PC-9 (cell line): ENCODE measurements at regions of chr20 and their contacts with region 1.

Region 1: GRCh38 chr20:24917797-24918578 is 31.1 kb upstream of the CST7 start:
- DNase-seq: peak; percentile 49 to 62
- H3K4me3 ChIP-seq: no peak overlapping the region
- H3K27ac ChIP-seq: no peak overlapping the region
- H3K4me1 ChIP-seq: 0 out of 2 replicates have a peak, but pooled peaks cover 5% of the 10 kb centered on the region
- H3K27me3 ChIP-seq: no peaks in the 10 kb centered on the region
- CTCF ChIP-seq: peak; percentile 93

Region 2: DNA sequence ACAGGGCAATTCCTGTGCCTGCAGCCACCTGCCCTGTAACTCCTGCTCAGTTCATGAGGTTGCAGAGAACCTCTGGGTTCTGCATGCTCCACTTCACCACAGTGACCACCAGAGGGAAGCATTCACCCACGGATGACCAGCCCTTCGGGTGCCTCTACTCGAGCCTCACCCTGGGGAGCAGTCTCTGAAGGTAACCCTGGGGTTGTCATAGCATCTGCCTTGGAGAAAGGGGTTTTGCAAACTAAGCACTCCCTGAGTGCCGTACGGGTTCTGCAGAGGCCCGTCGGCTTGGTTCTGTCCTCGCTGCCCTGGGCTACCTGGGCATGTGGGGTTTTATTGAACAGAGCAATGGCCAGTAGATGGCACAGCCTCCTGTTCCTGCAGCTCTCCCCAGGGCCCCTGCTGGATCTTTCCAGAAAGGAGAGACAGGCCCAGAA is 1028.2 kb before region 1 on chr20:
- CTCF ChIA-PET with region 1: no interaction called
- POLR2A ChIA-PET with region 1: no interaction called
- intact Hi-C with region 1: loop called (anchors 2 kb)
- DNase-seq: peak; percentile 63 to 83
- H3K4me3 ChIP-seq: no peak overlapping the region; the same call in 1 of the 2 replicates
- H3K27ac ChIP-seq: no peak overlapping the region
- H3K4me1 ChIP-seq: peaks cover 14% of the 10 kb centered on the region
- H3K27me3 ChIP-seq: no peaks in the 10 kb centered on the region
- CTCF ChIP-seq: peak; percentile 96

Region 3: DNA sequence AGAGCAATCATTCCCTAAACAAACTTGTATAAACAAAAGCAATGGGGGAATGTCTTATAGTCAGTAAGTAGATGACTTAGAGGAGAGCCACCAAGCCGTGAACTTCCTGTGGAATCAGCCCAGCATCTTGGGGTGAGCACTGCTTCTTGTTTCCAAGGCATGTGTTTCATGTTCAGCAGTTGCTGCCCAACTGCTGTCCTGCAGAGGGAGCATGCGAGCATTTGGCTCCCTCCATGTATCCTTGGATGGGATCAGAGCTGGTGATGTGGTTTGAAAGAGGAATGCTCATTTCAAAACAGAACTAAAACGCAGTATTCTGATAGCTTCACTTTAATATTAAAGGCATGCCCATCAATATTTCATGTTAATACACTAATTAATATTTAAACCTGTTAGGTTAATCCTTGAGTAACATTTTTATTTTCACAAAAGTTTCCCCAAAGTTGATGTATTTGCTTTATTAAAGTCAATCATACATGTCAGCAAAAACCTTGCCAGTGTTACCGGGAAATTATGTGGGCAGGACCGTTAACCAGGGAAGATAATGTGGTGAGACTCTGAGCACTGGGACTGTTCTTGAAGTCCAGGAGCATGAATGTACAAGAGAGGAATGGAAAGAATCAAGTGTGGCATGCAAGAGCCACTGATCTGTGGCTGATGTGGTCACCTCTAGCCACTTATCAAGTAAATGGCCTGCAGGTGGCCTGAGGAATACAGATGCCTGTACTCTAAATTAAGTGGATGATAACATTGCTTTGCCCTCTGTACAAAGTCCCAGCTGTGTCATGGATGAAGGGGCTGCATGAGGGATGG is 757.2 kb before region 1 on chr20:
- CTCF ChIA-PET with region 1: no interaction called
- POLR2A ChIA-PET with region 1: no interaction called
- intact Hi-C with region 1: loop called (anchors 5 kb)
- DNase-seq: peak in 1 of 2 experiments; percentile 36
- H3K4me3 ChIP-seq: no peak overlapping the region
- H3K27ac ChIP-seq: no peak overlapping the region
- H3K4me1 ChIP-seq: peaks cover 15% of the 10 kb centered on the region
- H3K27me3 ChIP-seq: no peaks in the 10 kb centered on the region
- CTCF ChIP-seq: peak; percentile 74

Region 4: DNA sequence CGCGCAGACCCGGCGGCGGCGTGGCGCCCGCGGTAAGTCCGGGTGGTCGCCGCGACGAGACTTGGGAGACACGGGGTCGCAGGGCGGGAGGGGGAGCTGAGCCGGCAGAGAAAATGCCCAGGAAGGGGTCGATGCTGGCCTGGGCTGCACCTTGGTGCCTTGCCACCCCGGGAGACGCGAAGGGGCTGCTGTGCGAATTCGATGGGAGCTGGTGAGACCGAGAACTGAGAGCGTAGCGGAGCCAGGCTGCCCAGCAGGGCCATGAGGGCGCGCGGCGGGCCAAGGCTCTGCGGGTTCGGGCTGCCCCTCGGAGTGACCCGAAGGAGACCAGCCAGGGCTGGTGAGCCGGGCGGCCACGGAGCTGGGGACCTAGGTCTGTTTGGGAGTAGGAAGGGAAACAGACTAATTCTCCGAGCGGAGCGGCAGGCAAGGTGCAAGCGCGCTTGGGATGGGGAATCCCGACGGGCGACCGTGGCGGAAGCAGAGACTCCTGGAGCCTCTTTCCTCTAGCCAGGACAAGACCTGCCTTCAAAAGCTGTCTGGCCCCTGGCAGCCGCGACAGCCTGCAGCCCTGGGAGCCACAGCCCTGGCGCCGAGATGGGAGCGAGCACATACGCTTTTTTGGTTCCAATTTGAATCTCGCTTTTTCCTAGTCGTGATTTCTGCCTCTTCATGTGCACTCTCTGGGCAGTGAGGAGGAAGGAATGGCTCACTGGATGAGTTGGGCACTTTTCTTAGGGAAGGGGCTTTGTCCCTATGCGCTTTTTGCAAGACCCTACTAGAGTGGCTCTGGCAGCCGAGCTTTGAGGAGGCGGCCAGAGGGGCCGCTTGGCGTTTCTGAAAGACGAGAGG is 447.9 kb before region 1 on chr20:
- CTCF ChIA-PET with region 1: no interaction called
- POLR2A ChIA-PET with region 1: no interaction called
- intact Hi-C with region 1: loop called (anchors 10 kb)
- DNase-seq: no peak
- H3K4me3 ChIP-seq: no peak overlapping the region
- H3K27ac ChIP-seq: no peak overlapping the region
- H3K4me1 ChIP-seq: no peaks in the 10 kb centered on the region
- H3K27me3 ChIP-seq: no peaks in the 10 kb centered on the region
- CTCF ChIP-seq: no peak

Region 5: DNA sequence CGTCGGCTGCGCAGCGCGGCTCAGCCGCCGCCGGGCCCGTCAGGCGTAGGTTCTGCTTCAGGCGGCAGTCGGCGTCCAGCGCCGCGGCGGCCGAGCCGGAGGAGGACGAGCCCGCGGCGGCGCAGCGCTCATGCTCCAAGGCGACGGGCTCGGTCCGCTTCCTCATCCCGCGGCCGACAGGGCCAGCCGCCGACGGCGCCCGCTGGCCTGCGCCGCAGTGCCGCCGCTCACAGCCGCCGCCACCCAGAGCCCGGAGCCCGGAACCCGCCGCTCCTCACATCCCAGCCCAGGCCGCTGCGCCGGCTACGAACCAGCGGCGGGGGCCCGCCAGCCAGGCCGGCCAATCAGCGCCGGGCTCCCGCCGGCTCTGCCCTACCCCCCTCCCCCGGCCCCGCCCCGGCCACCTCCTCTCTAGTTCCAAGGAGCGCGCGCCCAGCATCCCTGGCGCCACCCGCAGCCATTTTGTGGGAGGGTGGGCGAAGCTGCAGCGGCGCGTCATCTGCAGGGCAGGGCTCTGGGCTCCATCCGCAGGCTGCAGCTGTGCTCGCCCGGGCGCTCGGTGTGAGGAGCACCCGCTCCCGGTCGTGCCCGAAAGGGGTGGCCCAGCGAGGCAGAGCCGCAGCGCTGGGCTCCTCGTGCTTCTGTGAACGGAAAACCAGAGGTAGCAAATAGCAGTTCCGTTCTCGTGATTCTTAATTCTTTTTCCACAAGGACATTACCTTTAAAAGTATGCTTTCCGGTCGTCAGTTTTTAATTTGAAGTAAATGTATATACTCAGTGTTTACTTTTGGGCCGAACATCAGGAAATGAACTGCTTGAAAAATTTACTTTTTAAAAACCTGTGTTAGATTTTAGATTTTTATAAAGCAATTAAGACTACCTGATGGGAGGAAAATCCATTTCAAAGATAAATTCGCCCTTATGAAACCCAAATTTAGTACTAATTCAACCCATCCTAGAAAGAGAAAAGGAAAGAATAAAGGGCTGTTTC is 472.8 kb after region 1 on chr20 and contains the start of gene ABHD12:
- CTCF ChIA-PET with region 1: no interaction called
- POLR2A ChIA-PET with region 1: interaction called, 13 read pairs
- intact Hi-C with region 1: no loop called
- DNase-seq: peak; percentile 84 to 96
- H3K4me3 ChIP-seq: peak within 1 kb of the TSS; percentile 93
- H3K27ac ChIP-seq: peak within 1 kb of the TSS; percentile 48
- H3K4me1 ChIP-seq: peaks cover 18% of the 10 kb centered on the region
- H3K27me3 ChIP-seq: no peaks in the 10 kb centered on the region
- CTCF ChIP-seq: no peak
- total RNA-seq, gene ABHD12: 60.1 and 72.6 TPM in 2 replicates